ENCODE measurements at regions of chr15 and their contacts with region 1.

Region 1: DNA sequence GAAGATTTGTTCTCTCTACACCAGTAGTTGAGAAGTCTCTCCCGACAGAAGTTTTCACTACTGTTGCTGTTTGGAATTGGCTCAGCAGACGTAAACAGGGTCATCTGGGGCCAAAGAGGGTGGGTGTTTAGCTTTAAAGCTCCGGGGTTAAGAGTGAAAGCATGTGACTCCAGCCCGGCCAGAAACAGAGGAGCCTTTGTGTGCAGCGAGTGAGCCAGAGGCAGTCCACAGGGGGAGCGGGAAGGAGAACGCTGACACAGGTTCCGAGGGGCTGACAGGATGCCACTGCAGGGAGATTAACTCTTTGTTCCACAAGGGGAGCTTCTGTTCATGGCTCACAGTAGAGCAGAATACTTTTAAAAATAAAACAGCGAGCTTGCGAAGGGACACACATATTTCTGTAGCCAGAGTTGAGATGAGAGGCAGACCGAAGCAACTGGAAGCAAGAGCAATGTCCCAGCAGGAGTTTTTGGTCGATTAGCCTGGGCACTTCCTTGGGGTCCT is 26.9 kb downstream of the BMF start:
- DNase-seq: peak; percentile 65 to 93 (median 85)

Region 2: DNA sequence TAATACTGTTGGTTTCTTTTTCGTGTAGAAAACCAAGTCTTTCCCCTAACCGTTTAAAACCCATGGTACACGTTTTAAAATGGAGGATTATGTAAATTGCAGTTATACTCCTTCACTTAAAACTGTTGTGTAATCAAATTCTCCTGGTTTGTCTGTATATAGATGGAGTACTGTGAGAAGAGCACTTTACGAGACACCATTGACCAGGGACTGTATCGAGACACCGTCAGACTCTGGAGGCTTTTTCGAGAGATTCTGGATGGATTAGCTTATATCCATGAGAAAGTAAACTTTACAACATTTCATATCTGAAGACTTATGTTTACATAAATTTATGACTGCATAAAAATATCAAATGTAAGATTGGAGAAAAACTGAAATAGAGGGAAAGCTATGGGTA is 93.9 kb before region 1 on chr15:
- intact Hi-C with region 1: no loop called
- DNase-seq: no peak

Region 3: GRCh38 chr15:40058476-40059140 is 23.1 kb before region 1 on chr15:
- intact Hi-C with region 1: loop called (anchors 1 kb)
- DNase-seq: peak in 1 of 42 donors; percentile 9

Region 4: GRCh38 chr15:40103176-40103858 is 21.6 kb after region 1 on chr15:
- intact Hi-C with region 1: loop called (anchors 2 kb)
- DNase-seq: peak; percentile 75 to 93 (median 86)